Sigmoid colon (tissue), 7 donors: ENCODE measurements at regions of chr16 and their contacts with region 1.

Region 1: DNA sequence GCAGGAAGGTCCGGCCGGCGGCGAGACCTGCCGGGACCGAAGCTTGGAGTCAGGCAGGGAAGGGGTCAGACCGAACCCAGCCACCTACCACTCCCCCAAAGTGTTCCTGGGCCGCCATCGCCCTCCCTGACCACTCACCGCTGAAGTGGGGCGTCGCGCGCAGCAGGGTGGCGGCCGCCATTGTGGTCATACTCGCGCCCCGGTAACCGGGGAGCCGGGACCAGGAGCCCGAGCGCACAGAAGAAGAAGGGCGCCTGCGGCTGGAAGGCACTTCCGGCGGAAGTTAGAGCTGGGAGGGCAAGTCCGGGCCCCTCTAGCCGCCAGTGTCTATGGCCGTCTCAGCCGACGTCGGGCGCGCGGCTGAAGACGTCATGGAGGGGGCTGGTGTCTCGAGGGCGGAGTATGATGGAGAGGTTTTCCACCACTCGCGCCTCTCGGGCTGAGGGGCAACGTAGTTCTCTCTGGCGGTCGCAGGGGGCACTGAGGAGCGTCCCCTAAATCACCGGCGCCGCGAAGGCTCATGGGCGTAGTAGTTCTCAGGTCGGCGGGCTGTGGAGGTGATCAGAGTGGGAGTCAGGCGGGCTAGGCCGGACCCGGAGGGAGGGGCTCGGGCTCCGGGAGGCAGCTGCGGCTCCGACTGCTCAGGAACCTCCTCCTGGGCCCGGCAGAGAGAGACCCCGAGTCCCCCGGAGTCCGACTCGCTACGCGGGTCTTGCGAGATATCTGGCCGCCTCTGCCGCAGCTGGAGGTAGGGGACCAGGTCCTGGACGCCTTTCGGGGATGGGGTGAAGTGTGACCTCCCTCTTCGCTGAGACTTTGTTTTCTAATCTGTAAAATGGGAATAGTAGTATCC is at the start of gene TUFM:
- DNase-seq: peak; percentile 99
- H3K4me3 ChIP-seq: peak within 1 kb of the TSS; percentile 72 to 98 (median 80)
- H3K27ac ChIP-seq: peak within 1 kb of the TSS; percentile 91 to 95 (median 92)
- H3K4me1 ChIP-seq: peaks cover 0 to 27% (median 22%) of the 10 kb centered on the region in 4 donors
- H3K27me3 ChIP-seq: no peaks in the 10 kb centered on the region
- CTCF ChIP-seq: peak; percentile 44 to 61 (median 52)
- EP300 ChIP-seq: peak in 2 of 4 donors; percentile 36 to 83
- POLR2A ChIP-seq: peak; percentile 63 to 67
- total RNA-seq, gene TUFM: 75.3 to 115 (median 89.8) TPM

Region 2: DNA sequence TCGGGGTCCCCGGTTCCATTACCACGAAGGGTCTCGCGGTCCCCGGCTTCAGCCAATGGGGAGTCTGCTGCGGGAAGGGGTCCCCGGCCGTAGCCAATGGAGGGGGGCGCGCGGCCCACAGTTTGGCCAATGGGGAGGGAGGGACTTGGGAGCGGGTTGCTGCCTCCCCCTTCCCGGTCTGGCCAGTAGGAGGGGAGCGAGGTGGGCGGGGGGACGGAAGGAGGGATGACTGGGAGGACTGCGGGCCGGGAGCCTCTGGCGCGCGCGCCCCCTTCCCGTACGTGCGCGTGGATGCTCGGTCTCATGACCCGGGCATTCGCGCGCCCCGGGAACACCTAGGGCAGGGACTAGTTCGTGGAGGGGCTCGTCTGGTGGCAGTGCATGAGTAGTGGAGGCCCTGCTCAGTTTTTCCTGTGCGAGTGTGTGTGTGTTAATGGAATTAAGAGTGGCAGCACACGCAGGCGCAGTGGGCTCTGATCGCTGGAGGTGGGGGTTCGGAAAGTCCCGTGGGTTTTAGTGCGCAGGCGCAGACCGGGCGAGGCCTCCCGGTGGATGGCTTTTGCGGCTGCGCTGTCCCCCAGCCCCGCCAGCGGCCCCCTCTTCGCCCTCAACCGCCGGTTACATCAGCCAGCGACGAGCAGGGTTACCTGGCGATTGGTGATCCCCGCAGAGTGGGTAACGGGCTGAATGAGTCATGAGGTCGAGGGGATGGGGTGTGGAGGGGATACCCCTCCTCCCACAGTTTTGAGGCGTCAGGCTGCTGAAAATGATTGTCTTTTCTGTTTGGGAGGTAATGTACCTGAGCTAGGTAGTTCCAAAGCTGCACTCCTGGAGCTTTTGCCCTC is 22.2 kb before region 1 on chr16:
- intact Hi-C with region 1: loop called (anchors 2 kb)
- DNase-seq: peak; percentile 99
- H3K4me3 ChIP-seq: peak overlapping the region; percentile 92 to 100 (median 98)
- H3K27ac ChIP-seq: peak overlapping the region; percentile 97 to 100 (median 100)
- H3K4me1 ChIP-seq: peaks cover 0 to 25% (median 24%) of the 10 kb centered on the region in 4 donors
- H3K27me3 ChIP-seq: no peaks in the 10 kb centered on the region
- CTCF ChIP-seq: peak in 1 of 4 experiments; percentile 21
- EP300 ChIP-seq: no peak
- POLR2A ChIP-seq: peak; percentile 7 to 36

Region 3: GRCh38 chr16:28863929-28864793 is 17.9 kb after region 1 on chr16:
- intact Hi-C with region 1: loop called (anchors 1 kb)
- DNase-seq: peak; percentile 78
- H3K4me3 ChIP-seq: peak overlapping the region; percentile 77 to 96 (median 88)
- H3K27ac ChIP-seq: peak overlapping the region; percentile 91 to 95 (median 95)
- H3K4me1 ChIP-seq: peaks cover 0 to 31% (median 28%) of the 10 kb centered on the region in 4 donors
- H3K27me3 ChIP-seq: no peaks in the 10 kb centered on the region
- CTCF ChIP-seq: no peak
- EP300 ChIP-seq: no peak
- POLR2A ChIP-seq: no peak

Region 4: GRCh38 chr16:29802416-29802935 is 956.2 kb after region 1 on chr16:
- intact Hi-C with region 1: no loop called
- DNase-seq: no peak
- H3K4me3 ChIP-seq: no peak overlapping the region
- H3K27ac ChIP-seq: no peak overlapping the region
- H3K4me1 ChIP-seq: peaks cover 0 to 14% (median 14%) of the 10 kb centered on the region in 4 donors
- H3K27me3 ChIP-seq: no peaks in the 10 kb centered on the region
- CTCF ChIP-seq: no peak
- EP300 ChIP-seq: no peak
- POLR2A ChIP-seq: no peak